Lower leg skin (tissue), 4 donors: ENCODE measurements at regions of chr9 and their contacts with region 1.

Region 1: GRCh38 chr9:22657713-22658112 is 211.1 kb downstream of the DMRTA1 start:
- DNase-seq: no peak
- H3K4me3 ChIP-seq: no peak overlapping the region
- CTCF ChIP-seq: no peak
- POLR2A ChIP-seq: no peak

Region 2: DNA sequence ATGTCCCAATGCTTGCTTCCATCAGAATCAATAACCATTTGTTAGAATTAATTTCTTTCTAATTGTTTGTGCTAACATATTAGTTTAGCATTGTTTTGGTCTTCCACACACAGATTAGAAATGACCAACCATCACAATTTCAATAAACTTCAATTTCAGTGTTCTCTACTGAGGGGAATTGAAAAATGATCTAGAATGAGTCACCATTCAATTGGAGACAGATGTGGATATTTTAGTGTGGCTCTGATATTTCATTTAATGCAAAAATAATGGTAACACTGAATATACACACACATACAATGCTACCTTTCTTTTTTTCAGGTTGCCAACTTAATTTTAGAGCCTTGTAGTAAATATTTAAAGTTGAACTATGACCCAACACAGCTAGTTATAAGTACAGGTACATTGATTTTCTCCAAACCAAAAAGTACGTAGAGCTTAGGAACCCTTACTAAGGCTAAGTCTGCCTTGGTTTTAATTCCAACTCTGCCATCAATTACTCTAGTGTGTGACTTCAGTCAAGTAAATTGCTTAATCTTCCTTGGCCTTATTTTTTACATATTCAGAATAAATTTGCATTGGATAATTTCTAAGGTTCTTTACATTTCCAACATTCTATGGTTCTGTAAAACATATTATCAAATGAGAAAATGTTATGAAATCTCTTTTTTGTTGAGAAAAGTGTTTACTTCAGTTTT is 67.2 kb before region 1 on chr9:
- intact Hi-C with region 1: loop called (anchors 2 kb)
- DNase-seq: no peak
- H3K4me3 ChIP-seq: no peak overlapping the region
- CTCF ChIP-seq: no peak
- POLR2A ChIP-seq: no peak

Region 3: DNA sequence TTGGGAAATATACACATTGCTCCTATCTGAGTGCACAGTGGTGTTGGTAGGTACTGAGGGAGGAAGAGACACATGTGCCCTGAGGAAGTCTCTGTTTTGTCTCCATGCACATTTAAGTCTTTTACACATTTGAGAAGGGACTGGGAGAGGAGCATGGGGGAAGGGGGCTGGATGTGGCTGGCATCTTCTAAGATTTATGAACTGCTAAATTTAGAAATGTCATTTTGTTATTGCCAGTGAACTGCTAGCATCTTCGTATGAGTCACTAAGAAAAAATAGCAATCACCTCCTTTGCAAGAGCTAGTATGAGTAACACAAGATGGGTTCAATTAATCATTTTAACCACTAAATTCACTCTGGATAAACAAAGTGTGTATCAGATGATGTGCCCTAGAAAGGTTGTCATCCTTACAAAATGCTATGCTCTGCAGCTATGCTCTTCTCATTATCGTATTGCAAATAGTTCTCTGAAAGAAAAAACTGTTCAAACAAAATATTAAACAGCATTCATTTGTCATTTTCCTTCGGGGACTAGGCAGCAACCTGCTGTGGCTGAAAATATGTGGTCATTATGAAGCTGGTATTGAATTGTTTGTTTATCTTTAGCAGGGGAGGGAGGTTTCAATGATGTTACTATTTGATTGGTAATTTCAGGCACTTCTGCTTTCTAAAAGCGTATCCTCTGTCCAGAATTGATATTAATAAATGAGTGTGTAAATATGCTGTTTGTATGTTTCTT is 25.4 kb after region 1 on chr9:
- intact Hi-C with region 1: no loop called
- DNase-seq: no peak
- H3K4me3 ChIP-seq: no peak overlapping the region
- CTCF ChIP-seq: no peak
- POLR2A ChIP-seq: no peak